Aorta (tissue), 5 donors: ENCODE measurements at regions of chr3 and their contacts with region 1.

Region 1: GRCh38 chr3:185225523-185225922 is 28.3 kb downstream of the EHHADH start:
- DNase-seq: no peak
- ATAC-seq: no peak
- H3K4me3 ChIP-seq: no peak overlapping the region
- H3K27ac ChIP-seq: no peak overlapping the region
- H3K4me1 ChIP-seq: no peaks in the 10 kb centered on the region
- H3K27me3 ChIP-seq: no peaks in the 10 kb centered on the region

Region 2: DNA sequence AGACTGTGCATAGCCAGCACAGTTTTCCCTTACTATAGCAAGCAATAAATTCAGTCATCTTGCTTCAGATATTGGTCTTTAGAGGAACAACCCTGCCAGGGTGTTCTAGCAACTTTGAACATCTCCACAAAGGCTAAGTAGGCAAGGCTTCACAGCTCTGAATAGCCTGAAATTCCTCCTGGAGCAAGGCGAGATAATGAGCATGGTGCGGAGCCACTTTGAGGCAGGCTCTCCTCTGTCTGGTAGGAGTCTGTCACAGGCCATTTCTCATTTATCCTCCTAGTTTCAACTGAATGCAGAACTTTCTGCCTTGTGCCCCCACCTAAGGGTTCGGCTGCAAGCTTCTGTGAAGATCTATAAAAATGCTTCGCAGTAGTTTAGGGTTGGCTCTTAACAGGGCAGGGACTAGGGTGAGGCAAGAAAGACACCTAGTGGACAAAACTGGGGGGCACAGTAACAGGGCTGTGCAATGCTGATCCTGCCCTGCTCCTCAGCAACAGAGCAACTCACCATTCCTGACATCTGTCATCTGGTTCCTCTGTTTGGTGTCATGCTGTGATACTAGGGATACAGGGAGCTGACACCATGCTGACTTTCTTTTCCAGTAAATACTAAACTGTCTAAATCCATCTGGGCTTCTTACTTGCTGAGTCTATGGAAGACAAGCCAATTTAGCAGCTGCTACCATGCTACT is 44.9 kb after region 1 on chr3:
- intact Hi-C with region 1: loop called in 1 of 2 experiments (anchors 10 kb)
- DNase-seq: no peak
- ATAC-seq: no peak
- H3K4me3 ChIP-seq: no peak overlapping the region
- H3K27ac ChIP-seq: no peak overlapping the region
- H3K4me1 ChIP-seq: no peaks in the 10 kb centered on the region
- H3K27me3 ChIP-seq: no peaks in the 10 kb centered on the region